AG04450 (cell line): ENCODE measurements at regions of chr18 and their contacts with region 1.

Region 1: DNA sequence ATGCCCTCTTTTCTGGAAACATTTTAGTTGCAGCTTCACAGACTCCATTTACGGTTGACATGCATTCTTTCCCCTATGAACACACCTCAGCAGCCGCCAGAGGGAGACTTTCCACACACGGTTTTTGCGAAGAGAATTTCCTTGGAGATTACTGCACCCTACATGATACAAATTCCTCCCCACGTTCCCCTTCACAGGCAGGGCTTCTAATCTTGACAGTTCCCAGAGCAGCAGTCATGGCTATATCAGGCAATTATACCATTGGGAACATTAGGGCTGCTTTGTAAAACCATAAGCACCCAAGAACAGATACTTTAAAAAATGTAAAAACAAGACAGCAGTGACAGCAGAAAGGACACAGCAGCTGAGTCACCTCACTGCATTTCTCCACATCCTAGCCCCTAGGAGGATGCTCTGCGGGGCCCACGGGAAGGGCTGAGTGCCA is 253.8 kb downstream of the TGIF1 start:
- DNase-seq: peak; percentile 42
- H3K4me3 ChIP-seq: no peak overlapping the region
- H3K27ac ChIP-seq: peak overlapping the region; percentile 2
- H3K27me3 ChIP-seq: no peaks in the 10 kb centered on the region
- CTCF ChIP-seq: peak; percentile 91

Region 2: GRCh38 chr18:3256693-3257626 is 446.8 kb before region 1 on chr18:
- CTCF ChIA-PET with region 1: no interaction called
- POLR2A ChIA-PET with region 1: no interaction called
- DNase-seq: no peak
- H3K4me3 ChIP-seq: peak overlapping the region; percentile 28
- H3K27ac ChIP-seq: peak overlapping the region; percentile 80
- H3K27me3 ChIP-seq: no peaks in the 10 kb centered on the region
- CTCF ChIP-seq: no peak

Region 3: DNA sequence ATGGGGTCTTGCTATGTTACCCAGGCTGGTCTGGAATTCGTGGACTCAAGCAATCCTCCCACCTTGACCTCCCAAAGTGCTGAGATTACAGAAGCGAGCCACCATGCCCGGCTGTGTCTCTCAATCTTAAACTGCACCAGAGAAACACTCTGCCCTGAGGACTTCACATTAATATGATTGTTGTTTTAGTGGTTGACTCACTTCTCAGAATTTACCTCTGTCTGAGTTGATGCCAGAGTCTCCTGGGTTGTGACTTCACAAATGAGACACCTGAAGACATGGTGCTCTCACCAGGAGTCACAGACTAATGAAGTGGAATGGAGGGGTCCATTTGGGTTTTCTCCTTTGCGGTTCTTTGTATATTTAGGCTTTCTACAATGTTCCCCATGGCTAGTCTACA is 314.8 kb before region 1 on chr18:
- CTCF ChIA-PET with region 1: no interaction called
- POLR2A ChIA-PET with region 1: no interaction called
- DNase-seq: no peak
- H3K4me3 ChIP-seq: no peak overlapping the region
- H3K27ac ChIP-seq: no peak overlapping the region
- H3K27me3 ChIP-seq: peaks cover 3% of the 10 kb centered on the region
- CTCF ChIP-seq: no peak

Region 4: GRCh38 chr18:3688699-3689098 is 15.1 kb before region 1 on chr18:
- CTCF ChIA-PET with region 1: interaction called, 27 read pairs
- POLR2A ChIA-PET with region 1: no interaction called
- DNase-seq: peak; percentile 96
- H3K4me3 ChIP-seq: no peak overlapping the region
- H3K27ac ChIP-seq: peak overlapping the region; percentile 47
- H3K27me3 ChIP-seq: no peaks in the 10 kb centered on the region
- CTCF ChIP-seq: no peak

Region 5: DNA sequence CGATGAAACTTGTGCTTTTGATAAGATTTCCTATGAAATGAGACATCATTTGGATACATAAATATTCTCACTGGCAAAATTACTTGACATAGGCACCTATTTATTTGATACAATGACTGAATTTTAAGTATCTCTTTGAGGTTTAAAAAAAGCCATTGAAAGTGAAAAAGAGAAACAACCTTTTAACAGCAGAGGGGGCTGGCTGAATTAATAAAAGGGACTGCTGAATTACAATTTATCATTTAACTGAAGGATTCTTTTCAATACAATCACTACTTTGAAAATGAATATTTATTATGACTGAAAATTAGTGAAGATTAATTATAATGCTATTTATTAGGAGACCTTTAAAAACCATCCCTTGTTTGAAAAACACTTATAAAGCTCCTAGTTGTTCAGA is 416.1 kb after region 1 on chr18:
- CTCF ChIA-PET with region 1: no interaction called
- POLR2A ChIA-PET with region 1: no interaction called
- DNase-seq: no peak
- H3K4me3 ChIP-seq: no peak overlapping the region
- H3K27ac ChIP-seq: no peak overlapping the region
- H3K27me3 ChIP-seq: no peaks in the 10 kb centered on the region
- CTCF ChIP-seq: no peak